Naive thymus-derived CD8-positive, alpha-beta T cell (primary cell): ENCODE measurements at regions of chr16 and their contacts with region 1.

Region 1: DNA sequence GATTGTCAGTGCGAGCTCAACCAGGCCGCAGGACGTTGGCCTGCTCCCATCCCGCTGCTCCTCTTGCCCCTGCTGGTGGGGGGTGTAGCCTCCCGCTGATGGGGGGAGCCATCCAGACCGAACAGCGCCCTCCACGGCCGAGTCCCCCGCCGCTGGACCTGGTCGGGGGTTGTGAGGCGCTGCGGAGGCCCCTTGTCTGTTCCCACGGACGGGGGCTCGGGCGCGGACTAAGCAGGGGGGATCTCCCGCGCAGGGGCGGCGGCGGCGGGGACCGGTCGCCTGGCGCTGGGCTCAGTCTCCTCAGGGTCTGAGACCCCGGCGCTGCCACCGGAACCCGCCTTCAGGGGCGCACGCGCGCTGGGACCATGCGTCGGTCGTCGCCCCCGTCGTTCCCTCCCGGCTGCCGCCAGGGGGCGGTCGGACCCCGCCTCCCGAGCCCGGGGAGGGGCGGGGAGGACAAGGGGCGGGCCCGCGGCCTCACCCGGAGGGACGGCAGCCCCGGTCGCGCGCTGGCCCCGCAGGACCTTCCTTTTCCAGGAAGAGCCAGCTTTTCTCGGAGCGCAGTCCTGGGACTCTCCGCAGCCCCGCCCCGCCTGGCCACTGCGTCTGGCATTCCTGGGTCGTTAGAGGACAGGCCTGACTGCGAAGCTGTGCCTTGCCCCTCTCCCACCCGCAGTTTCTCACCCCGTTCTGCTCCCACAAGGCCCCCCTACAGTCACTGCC is 6.3 kb upstream of the IL32 start:
- DNase-seq: peak; percentile 75 to 93 (median 90)
- ATAC-seq: peak; percentile 90
- H3K4me3 Mint-ChIP-seq: peak overlapping the region; percentile 83 to 95 (median 88)
- H3K27ac Mint-ChIP-seq: peak overlapping the region; percentile 84 to 95 (median 92)
- H3K4me1 Mint-ChIP-seq: peaks cover 23 to 64% (median 55%) of the 10 kb centered on the region in 4 donors
- H3K27me3 Mint-ChIP-seq: no peaks in the 10 kb centered on the region

Region 2: GRCh38 chr16:3045357-3045728 is 13.8 kb before region 1 on chr16:
- POLR2A ChIA-PET with region 1: interaction called, 23 read pairs
- DNase-seq: peak in 2 of 10 donors; percentile 52 to 55
- ATAC-seq: peak; percentile 70 to 76
- H3K4me3 Mint-ChIP-seq: peak overlapping the region; percentile 71 to 87 (median 78)
- H3K27ac Mint-ChIP-seq: peak overlapping the region in 3 of 10 donors; percentile 52 to 63 (median 63)
- H3K4me1 Mint-ChIP-seq: peaks cover 12 to 27% (median 25%) of the 10 kb centered on the region in 4 donors
- H3K27me3 Mint-ChIP-seq: peaks cover 0 to 34% (median 25%) of the 10 kb centered on the region in 5 donors

Region 3: GRCh38 chr16:3087243-3088235 is 28.4 kb after region 1 on chr16:
- POLR2A ChIA-PET with region 1: interaction called, 12 read pairs
- DNase-seq: no peak
- ATAC-seq: no peak
- H3K4me3 Mint-ChIP-seq: peak overlapping the region in 7 of 10 donors; percentile 6 to 70 (median 49)
- H3K27ac Mint-ChIP-seq: peak overlapping the region in 7 of 10 donors; percentile 41 to 91 (median 61)
- H3K4me1 Mint-ChIP-seq: peaks cover 17 to 54% (median 40%) of the 10 kb centered on the region in 4 donors
- H3K27me3 Mint-ChIP-seq: no peaks in the 10 kb centered on the region

Region 4: GRCh38 chr16:3099732-3100499 is 40.8 kb after region 1 on chr16:
- POLR2A ChIA-PET with region 1: interaction called, 261 read pairs
- DNase-seq: peak; percentile 68 to 93 (median 78)
- ATAC-seq: peak; percentile 78 to 86
- H3K4me3 Mint-ChIP-seq: peak overlapping the region; percentile 70 to 87 (median 78)
- H3K27ac Mint-ChIP-seq: peak overlapping the region in 9 of 10 donors; percentile 46 to 90 (median 79)
- H3K4me1 Mint-ChIP-seq: peaks cover 24 to 60% (median 58%) of the 10 kb centered on the region in 4 donors
- H3K27me3 Mint-ChIP-seq: no peaks in the 10 kb centered on the region

Region 5: DNA sequence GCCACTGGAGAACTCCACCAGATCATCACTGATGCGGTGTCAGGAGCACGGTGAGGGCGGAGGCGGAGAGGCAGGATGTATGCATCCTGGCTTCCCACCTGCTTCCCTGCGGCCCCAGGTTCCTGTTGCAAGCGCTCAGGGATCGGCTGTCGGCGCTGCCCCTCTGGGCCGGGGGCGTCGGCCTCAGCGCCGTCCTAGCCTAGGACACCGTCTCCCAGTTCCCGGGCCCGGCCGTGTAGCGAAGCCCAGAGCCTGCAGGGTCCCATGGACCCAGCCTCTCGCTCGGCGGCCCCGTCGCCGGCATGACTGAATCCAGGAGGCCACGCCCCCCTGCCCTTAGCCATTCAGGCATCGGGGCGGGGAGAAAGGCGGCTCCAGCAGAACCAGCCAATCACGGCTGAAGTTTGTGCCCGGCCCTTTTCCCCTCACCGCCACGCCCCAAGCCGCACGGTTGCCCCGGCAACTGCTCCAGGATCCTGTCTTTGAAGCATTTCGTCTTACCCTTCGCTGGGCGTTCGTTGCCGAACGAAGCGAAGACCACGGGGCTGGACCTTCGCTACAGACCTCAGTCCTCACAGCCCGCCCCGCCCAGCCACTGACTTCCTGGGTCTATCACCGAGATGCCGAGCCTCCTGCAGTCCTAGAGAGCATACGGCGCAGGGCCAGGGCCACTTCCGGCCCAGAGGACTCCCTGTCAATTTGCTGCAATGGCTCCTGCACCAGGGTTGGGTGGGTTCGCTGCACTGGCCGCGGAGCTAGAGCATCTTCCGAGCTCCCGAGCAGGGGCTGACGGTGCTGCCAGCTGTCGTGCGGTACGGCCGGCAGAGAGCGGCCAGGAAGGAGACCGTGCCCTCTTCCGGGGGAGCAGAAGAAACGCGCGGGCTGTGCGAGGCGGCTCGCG is 65.1 kb after region 1 on chr16:
- POLR2A ChIA-PET with region 1: interaction called, 278 read pairs
- DNase-seq: peak; percentile 94 to 99 (median 97)
- ATAC-seq: peak; percentile 87 to 88
- H3K4me3 Mint-ChIP-seq: peak overlapping the region; percentile 94 to 98 (median 96)
- H3K27ac Mint-ChIP-seq: peak overlapping the region; percentile 91 to 99 (median 97)
- H3K4me1 Mint-ChIP-seq: peaks cover 20 to 55% (median 43%) of the 10 kb centered on the region in 4 donors
- H3K27me3 Mint-ChIP-seq: no peaks in the 10 kb centered on the region

Region 6: DNA sequence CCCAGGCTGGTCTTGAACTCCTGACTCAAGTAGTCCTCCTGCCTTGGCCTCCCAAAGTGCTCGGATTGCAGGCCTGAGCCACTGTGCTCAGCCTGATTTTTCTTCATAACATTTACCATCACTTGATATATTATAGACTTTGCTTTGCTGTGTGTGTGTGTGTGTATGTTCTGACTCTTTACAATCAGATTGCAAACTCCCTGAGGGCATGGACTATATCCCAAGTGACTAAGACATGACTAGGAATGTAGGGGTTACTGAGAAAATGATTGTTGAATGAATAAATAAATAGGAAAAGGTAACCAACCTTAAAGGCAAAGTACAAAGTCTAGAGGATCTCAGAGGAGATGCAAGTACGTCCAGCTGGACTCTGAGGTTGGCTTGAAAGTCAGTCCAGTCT is 286.9 kb after region 1 on chr16:
- POLR2A ChIA-PET with region 1: no interaction called
- DNase-seq: no peak
- ATAC-seq: no peak
- H3K4me3 Mint-ChIP-seq: no peak overlapping the region
- H3K27ac Mint-ChIP-seq: no peak overlapping the region
- H3K4me1 Mint-ChIP-seq: no peaks in the 10 kb centered on the region
- H3K27me3 Mint-ChIP-seq: peaks cover 0 to 3% (median 2%) of the 10 kb centered on the region in 5 donors